Sciatic nerve (tissue), 2 donors: ENCODE measurements at regions of chr3 and their contacts with region 1.

Region 1: GRCh38 chr3:67154429-67154828 is 156.3 kb downstream of the KBTBD8 start:
- DNase-seq: no peak
- ATAC-seq: no peak

Region 2: GRCh38 chr3:67113802-67114407 is 40.5 kb before region 1 on chr3:
- intact Hi-C with region 1: no loop called
- DNase-seq: peak; percentile 81
- ATAC-seq: peak; percentile 64

Region 3: DNA sequence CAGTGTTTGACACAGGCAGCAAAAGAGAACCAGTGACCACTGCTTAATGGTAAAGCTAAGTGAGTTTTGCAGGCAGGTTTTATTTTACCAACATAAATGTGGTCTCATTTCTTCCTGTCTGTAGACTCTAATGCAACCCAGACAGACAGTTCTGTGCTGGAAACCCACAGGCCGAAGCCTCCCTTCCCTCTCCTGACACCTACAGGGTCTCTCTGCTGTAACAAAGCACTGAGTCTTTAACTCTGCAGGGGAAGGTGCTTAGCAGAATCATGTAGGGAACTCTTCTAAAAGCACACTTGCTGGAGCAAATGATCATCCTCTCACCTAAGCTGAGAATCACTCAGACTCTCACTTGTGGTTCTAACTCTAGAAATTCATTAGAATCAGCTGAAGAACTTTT is 43.9 kb after region 1 on chr3:
- intact Hi-C with region 1: loop called (anchors 5 kb)
- DNase-seq: no peak
- ATAC-seq: no peak